SK-N-SH (cell line): ENCODE measurements at regions of chr14 and their contacts with region 1.

Region 1: DNA sequence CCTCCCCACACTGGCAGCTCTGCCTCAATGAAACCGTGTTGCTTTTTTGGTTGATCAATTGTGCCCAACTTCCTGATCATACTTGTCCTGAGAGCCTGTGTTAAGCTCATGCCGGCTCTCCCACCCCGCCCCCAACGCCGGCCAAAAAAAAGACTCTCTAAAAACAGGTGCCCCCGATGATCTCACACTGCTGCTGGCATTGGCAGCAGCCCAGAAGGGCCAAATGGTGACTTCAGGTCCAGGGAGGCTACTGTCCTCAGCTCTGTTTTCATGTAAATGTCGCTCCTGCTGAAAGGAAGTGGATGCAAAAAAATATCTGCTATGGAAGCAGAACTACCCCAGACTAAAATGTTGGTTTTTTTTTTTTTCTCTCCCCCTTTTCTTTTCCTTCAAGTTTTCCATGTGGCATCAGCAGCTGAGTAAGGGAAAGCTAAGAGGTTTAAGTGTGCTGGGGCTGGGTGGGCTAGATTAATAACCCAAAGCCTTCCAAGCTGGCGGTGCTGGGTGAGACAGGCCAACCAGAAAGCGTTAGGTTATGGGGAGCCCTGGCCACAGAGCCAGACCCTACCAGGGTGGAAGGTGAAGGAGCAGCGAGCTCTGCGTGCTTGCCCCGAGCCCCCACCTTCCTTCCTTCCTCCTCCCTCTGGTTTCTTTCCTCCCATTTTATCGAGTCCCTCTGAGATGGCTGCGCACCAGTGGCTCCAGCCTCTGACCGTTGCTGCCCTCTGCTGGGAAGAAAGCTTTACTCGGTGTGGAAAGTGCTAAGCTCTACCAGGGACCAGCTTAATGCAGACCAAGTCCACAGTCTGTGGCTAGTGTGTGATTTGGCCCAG is 396.1 kb downstream of the NRXN3 start:
- DNase-seq: peak; percentile 72
- H3K4me3 ChIP-seq: peak overlapping the region; percentile 24 to 44; a peak in 1 of 4 replicates
- H3K27ac ChIP-seq: no peak overlapping the region
- H3K4me1 ChIP-seq: no peaks in the 10 kb centered on the region; a peak in 1 of 4 replicates
- H3K27me3 ChIP-seq: no peaks in the 10 kb centered on the region
- CTCF ChIP-seq: peak; percentile 45
- EP300 ChIP-seq: no peak
- RAD21 ChIP-seq: peak; percentile 86

Region 2: GRCh38 chr14:77862154-77862786 is 704.0 kb before region 1 on chr14:
- CTCF ChIA-PET with region 1: interaction called, 62 read pairs
- POLR2A ChIA-PET with region 1: no interaction called
- DNase-seq: peak; percentile 84
- H3K4me3 ChIP-seq: peak overlapping the region in 1 of 2 experiments; percentile 40; a peak in 1 of 4 replicates
- H3K27ac ChIP-seq: no peak overlapping the region
- H3K4me1 ChIP-seq: no peaks in the 10 kb centered on the region; a peak in 1 of 4 replicates
- H3K27me3 ChIP-seq: no peaks in the 10 kb centered on the region
- CTCF ChIP-seq: peak; percentile 98
- EP300 ChIP-seq: no peak
- RAD21 ChIP-seq: peak; percentile 90

Region 3: DNA sequence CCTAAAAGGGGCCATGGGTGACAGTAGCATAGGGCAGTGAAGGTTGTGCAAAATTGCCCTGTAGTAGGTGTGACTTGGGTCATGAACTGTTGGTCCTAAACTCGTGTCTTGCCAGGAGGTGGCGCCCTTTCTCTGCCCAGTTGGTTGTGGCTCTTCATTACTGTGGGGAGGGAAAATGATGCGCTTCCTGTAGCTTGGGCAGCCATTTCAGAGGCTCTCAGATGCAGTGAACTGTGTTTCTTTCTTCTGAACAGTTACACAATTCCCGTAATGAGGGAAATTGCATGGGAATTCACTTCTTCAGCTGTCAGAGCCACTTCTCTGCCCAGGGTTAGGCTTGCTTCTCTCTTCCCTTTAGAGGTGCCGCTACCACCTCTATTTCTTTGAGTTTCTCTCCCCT is 544.2 kb before region 1 on chr14:
- CTCF ChIA-PET with region 1: interaction called, 23 read pairs
- POLR2A ChIA-PET with region 1: no interaction called
- DNase-seq: peak; percentile 67
- H3K4me3 ChIP-seq: peak overlapping the region in 1 of 2 experiments; percentile 50; a peak in 1 of 4 replicates
- H3K27ac ChIP-seq: no peak overlapping the region
- H3K4me1 ChIP-seq: no peaks in the 10 kb centered on the region
- H3K27me3 ChIP-seq: no peaks in the 10 kb centered on the region
- CTCF ChIP-seq: peak; percentile 39
- EP300 ChIP-seq: no peak
- RAD21 ChIP-seq: peak; percentile 77

Region 4: GRCh38 chr14:78448164-78449094 is 117.8 kb before region 1 on chr14:
- CTCF ChIA-PET with region 1: interaction called, 50 read pairs
- POLR2A ChIA-PET with region 1: no interaction called
- DNase-seq: peak; percentile 61
- H3K4me3 ChIP-seq: peak overlapping the region in 1 of 2 experiments; percentile 23; a peak in 1 of 4 replicates
- H3K27ac ChIP-seq: no peak overlapping the region
- H3K4me1 ChIP-seq: no peaks in the 10 kb centered on the region; a peak in 1 of 4 replicates
- H3K27me3 ChIP-seq: no peaks in the 10 kb centered on the region
- CTCF ChIP-seq: peak; percentile 48
- EP300 ChIP-seq: no peak
- RAD21 ChIP-seq: peak; percentile 71

Region 5: DNA sequence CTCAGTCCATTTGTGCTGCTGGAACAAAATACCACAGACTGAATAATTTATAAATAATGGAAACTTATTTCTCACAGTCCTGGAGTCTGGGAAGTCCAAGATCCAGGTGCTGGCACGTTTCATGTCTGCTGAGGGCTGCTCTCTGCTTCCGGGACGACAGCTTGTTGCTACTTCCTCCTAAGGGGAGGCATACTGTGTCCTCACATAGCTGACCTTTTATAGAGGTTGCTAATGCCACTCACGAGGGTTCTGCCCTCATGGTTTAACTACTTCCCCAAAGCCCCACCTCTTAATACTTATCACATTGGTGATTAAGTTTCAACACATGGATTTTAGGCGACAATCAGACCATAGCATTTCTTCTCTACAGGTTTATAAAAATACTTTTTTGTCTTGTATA is 15.0 kb after region 1 on chr14:
- CTCF ChIA-PET with region 1: interaction called, 56 read pairs
- POLR2A ChIA-PET with region 1: no interaction called
- DNase-seq: no peak
- H3K4me3 ChIP-seq: no peak overlapping the region
- H3K27ac ChIP-seq: no peak overlapping the region
- H3K4me1 ChIP-seq: no peaks in the 10 kb centered on the region
- H3K27me3 ChIP-seq: no peaks in the 10 kb centered on the region
- CTCF ChIP-seq: no peak
- EP300 ChIP-seq: no peak
- RAD21 ChIP-seq: no peak

Region 6: DNA sequence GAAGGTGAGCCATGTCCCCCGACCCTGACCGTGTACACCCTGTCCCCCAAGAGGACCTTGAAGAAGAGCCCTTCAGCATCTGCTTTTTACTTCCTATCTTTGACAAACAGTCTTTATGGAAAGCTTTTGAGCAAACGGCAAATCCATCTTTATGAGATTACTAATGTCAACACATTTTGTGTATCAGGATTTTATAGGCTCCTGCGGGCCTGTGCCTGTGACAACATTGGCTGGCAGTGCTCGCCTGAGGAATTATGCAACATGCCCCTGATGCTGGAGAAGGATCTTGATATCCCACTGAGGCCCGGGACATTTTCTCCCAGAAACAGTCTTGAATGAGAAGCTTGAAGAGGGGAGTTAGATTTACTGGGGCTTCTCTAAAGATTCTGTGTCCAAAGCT is 20.4 kb after region 1 on chr14:
- CTCF ChIA-PET with region 1: interaction called, 56 read pairs
- POLR2A ChIA-PET with region 1: no interaction called
- DNase-seq: no peak
- H3K4me3 ChIP-seq: no peak overlapping the region
- H3K27ac ChIP-seq: no peak overlapping the region
- H3K4me1 ChIP-seq: no peaks in the 10 kb centered on the region
- H3K27me3 ChIP-seq: no peaks in the 10 kb centered on the region
- CTCF ChIP-seq: no peak
- EP300 ChIP-seq: no peak
- RAD21 ChIP-seq: no peak

Region 7: GRCh38 chr14:78598041-78598920 is 32.0 kb after region 1 on chr14:
- CTCF ChIA-PET with region 1: interaction called, 52 read pairs
- POLR2A ChIA-PET with region 1: no interaction called
- DNase-seq: peak; percentile 70
- H3K4me3 ChIP-seq: peak overlapping the region in 1 of 2 experiments; percentile 39; a peak in 1 of 4 replicates
- H3K27ac ChIP-seq: no peak overlapping the region
- H3K4me1 ChIP-seq: no peaks in the 10 kb centered on the region
- H3K27me3 ChIP-seq: no peaks in the 10 kb centered on the region
- CTCF ChIP-seq: peak; percentile 82
- EP300 ChIP-seq: no peak
- RAD21 ChIP-seq: peak; percentile 86